ENCODE measurements at regions of chr15 and their contacts with region 1.

Region 1: DNA sequence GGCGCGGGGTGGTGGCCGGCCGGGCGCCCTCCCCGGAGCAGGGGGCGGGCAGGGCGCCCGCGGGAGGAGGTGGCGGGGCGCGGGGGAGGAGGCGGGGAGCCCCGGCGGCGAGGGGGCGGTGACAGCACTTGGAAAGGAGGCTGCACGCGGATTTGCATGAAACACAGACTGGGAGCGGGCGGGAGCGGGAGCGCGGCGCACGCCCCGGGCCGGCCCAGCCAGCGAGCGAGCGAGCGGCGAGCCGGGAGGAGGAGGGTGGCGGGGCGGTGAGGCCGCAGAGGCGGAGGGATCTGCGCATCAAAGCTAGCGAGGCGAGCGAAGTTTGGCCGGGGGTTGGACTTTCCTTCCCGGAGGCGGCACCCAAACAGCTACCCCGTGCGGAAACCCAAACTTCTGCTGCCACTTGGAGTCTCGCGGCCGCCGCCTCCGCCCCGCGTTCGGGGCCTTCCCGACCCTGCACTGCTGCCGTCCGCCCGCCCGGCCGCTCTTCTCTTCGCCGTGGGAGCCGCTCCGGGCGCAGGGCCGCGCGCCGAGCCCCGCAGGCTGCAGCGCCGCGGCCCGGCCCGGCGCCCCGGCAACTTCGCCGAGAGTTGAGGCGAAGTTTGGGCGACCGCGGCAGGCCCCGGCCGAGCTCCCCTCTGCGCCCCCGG is at the start of gene SMAD3:
- DNase-seq: peak; percentile 86
- H3K4me3 Mint-ChIP-seq: peak within 1 kb of the TSS; percentile 95
- H3K27ac Mint-ChIP-seq: peak within 1 kb of the TSS; percentile 90
- H3K4me1 Mint-ChIP-seq: peaks cover 41% of the 10 kb centered on the region
- H3K27me3 Mint-ChIP-seq: peaks cover 10% of the 10 kb centered on the region
- total RNA-seq, gene SMAD3: 50.2 to 50.5 TPM

Region 2: GRCh38 chr15:66151809-66152208 is 913.8 kb before region 1 on chr15:
- CTCF ChIA-PET with region 1: no interaction called
- POLR2A ChIA-PET with region 1: no interaction called
- intact Hi-C with region 1: no loop called
- DNase-seq: no peak
- H3K4me3 Mint-ChIP-seq: no peak overlapping the region
- H3K27ac Mint-ChIP-seq: no peak overlapping the region
- H3K4me1 Mint-ChIP-seq: no peaks in the 10 kb centered on the region
- H3K27me3 Mint-ChIP-seq: no peaks in the 10 kb centered on the region

Region 3: DNA sequence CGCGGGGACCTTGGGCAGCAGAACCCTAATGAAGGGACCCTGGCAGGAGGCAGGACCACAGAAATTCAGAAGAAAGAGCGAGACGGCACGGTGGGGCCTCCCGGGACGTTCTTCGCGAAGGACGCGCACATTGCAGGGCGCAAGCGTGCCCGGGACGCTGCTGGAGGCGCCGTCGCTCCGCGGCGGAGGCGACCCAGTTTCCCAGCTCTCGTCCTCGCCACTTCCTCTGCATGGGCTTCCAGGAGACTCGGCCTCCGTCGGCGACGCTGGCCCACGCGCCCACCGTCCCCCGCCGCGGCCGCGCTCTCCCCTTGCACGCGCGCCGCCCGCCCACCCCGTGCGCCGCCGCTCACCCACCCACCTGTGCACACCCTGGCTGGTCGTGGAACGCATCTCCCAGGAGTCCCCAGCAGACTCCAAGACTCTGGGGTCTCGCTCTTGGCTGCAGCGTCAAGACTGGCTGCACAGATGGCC is 32.0 kb before region 1 on chr15:
- CTCF ChIA-PET with region 1: interaction called, 3 read pairs
- POLR2A ChIA-PET with region 1: interaction called, 3 read pairs
- intact Hi-C with region 1: loop called (anchors 5 kb)
- DNase-seq: peak; percentile 40
- H3K4me3 Mint-ChIP-seq: peak overlapping the region; percentile 64
- H3K27ac Mint-ChIP-seq: no peak overlapping the region
- H3K4me1 Mint-ChIP-seq: peaks cover 21% of the 10 kb centered on the region
- H3K27me3 Mint-ChIP-seq: peaks cover 7% of the 10 kb centered on the region

Region 4: DNA sequence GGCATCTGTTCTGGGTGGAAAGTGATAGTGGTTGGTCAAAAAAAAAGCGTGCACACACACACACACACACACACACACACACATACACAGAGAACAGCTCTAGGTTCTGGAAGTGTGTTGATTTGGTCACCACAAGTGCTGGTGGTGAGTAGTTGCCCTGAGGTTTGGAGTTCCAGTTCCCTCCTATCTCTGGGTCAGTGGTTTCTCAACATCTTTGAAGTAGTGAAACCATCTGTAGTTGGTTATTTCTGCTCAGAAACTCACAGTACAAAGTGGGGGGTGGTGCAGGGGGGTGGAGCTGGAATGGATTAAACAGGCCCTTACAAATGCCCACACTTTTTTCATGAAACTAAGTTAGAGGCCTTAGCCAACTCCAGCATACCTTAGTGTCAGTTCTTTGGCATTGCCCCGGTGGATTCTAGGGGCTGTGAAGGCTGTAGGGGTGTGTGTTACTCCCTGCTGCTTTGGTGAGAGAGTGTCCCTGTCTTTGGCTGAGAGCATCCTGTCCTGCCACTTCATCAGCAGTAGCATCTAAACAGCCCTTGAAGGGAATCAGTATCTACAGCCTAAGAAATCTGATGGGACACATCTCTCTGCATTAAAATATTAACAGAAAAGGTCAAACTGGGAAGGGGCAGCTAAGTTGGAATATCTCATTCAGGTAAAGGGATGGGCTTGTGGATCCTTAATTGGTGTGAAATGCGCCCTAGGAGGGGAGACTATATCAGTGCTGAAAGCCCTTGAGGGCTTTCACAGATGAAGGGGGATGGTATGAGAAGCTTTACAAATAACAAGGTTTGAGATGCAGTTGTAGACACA is 20.5 kb after region 1 on chr15:
- CTCF ChIA-PET with region 1: interaction called, 69 read pairs
- POLR2A ChIA-PET with region 1: interaction called, 54 read pairs
- intact Hi-C with region 1: loop called (anchors 1 kb)
- DNase-seq: peak; percentile 70
- H3K4me3 Mint-ChIP-seq: peak overlapping the region; percentile 1
- H3K27ac Mint-ChIP-seq: peak overlapping the region; percentile 82
- H3K4me1 Mint-ChIP-seq: peaks cover 98% of the 10 kb centered on the region
- H3K27me3 Mint-ChIP-seq: no peaks in the 10 kb centered on the region

Region 5: DNA sequence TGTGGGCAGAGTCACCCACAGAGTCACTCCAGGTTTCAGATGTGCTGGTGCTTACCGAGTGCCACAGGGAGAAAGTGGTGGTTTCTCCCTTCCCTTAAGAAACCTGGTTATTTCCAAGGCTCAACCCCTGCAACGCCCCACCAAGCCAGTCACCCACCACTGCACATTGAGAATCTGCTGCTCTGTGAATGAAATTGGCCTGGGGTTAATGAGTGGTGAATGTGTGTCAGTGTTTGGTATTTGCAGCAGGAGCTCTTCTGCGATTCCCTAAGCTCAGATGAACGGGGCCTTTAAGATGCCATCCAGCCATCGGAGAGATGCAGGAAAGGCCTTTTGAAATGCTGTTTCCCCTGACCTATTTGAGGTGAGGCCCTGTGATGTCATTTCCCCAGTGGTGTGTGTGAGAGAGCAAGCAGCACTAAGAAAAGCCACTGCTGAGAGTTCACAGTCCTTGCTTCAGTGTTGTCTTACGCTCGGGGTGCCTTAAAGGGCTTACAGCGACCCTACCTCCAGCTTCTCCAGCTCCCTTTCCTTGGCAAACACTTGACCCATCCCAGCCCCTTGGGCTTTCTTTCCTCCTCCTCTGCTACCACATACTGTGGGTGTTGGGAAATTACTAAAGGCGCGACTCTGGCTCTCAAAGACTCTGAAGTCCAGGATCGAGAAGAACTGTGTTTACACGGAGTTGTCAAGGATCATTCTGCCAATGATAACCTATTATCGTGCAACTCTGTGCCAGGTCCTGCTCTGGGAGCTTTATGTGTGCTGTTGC is 68.7 kb after region 1 on chr15:
- CTCF ChIA-PET with region 1: interaction called, 4 read pairs
- POLR2A ChIA-PET with region 1: interaction called, 3 read pairs
- intact Hi-C with region 1: loop called (anchors 5 kb)
- DNase-seq: peak; percentile 79
- H3K4me3 Mint-ChIP-seq: peak overlapping the region; percentile 82
- H3K27ac Mint-ChIP-seq: peak overlapping the region; percentile 95
- H3K4me1 Mint-ChIP-seq: peaks cover 92% of the 10 kb centered on the region
- H3K27me3 Mint-ChIP-seq: no peaks in the 10 kb centered on the region

Region 6: DNA sequence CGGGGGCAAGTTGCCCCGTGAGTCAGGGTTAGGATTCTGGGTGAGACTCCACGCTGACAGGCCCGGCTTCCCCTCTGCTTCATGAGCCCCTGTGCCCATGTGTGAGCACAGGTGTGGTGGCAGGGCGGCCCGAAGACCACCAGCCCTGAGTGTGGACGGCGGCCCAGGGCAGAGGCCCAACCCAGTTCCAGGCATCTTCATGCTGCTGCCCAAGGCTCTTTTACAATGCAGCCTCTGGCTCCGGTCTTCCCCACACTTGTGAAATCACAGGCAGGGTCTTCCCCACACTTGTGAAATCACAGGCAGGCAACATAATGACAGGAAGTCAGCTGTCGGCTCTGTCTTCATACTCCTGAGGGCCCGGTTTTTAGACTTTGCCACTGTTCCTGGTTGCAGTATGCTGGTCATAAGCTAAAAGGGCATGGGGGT is 110.1 kb after region 1 on chr15:
- CTCF ChIA-PET with region 1: no interaction called
- POLR2A ChIA-PET with region 1: interaction called, 3 read pairs
- intact Hi-C with region 1: loop called (anchors 2 kb)
- DNase-seq: peak; percentile 77
- H3K4me3 Mint-ChIP-seq: no peak overlapping the region
- H3K27ac Mint-ChIP-seq: peak overlapping the region; percentile 79
- H3K4me1 Mint-ChIP-seq: peaks cover 65% of the 10 kb centered on the region
- H3K27me3 Mint-ChIP-seq: no peaks in the 10 kb centered on the region

Measured in activated CD4-positive, alpha-beta memory T cell treated with anti-CD3 and anti-CD28 coated beads for 36 hours (primary cell).